Prostate gland (tissue), 2 donors: ENCODE measurements at regions of chr6 and their contacts with region 1.

Region 1: GRCh38 chr6:797479-798077 is 104.6 kb upstream of the EXOC2 start:
- DNase-seq: peak; percentile 59
- H3K4me3 ChIP-seq: no peak overlapping the region
- H3K27ac ChIP-seq: no peak overlapping the region
- H3K4me1 ChIP-seq: no peaks in the 10 kb centered on the region
- H3K27me3 ChIP-seq: peaks cover 2% of the 10 kb centered on the region
- CTCF ChIP-seq: peak; percentile 51 to 90 (median 78)
- POLR2A ChIP-seq: no peak

Region 2: GRCh38 chr6:527989-528673 is 269.4 kb before region 1 on chr6:
- intact Hi-C with region 1: no loop called
- DNase-seq: no peak
- H3K4me3 ChIP-seq: no peak overlapping the region
- H3K27ac ChIP-seq: no peak overlapping the region
- H3K4me1 ChIP-seq: no peaks in the 10 kb centered on the region
- H3K27me3 ChIP-seq: no peaks in the 10 kb centered on the region
- CTCF ChIP-seq: no peak
- POLR2A ChIP-seq: no peak

Region 3: GRCh38 chr6:579339-579738 is 218.2 kb before region 1 on chr6:
- intact Hi-C with region 1: no loop called
- DNase-seq: no peak
- H3K4me3 ChIP-seq: no peak overlapping the region
- H3K27ac ChIP-seq: no peak overlapping the region
- H3K4me1 ChIP-seq: no peaks in the 10 kb centered on the region
- H3K27me3 ChIP-seq: no peaks in the 10 kb centered on the region
- CTCF ChIP-seq: no peak
- POLR2A ChIP-seq: no peak

Region 4: DNA sequence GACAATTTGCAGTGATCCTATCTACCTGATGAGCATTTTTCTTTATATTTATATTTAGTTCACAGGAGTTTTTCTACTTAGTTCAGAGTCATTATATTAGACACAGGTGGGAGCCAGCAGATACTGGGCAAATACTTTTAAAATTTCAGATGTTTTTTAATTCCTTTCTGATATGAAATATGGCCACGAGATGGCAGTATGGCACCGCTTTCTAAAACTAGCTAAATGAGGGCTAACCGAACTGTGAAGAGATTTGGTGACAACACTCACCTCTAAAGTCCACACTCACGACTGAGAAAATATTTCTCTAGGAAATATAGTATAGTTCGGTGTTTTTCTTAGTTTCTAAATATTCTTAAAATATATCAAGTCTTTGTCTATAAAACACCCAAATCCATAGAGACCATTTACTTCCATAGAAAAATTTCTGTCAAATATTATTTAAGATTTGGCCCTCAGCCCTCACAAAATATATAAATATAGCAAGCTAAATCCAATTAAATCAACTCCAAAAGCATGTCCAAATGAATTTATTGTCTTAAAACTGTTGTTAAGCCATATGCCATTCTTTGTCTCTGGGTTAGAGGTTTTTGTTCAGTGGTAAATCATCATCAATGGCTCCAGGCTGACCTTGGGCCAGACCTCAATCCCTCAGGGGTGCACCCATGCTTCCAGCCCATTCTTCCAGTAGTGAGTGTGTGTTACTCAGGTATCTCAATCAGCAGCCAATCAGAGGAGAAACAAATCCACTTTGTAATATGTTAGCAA is 204.3 kb before region 1 on chr6:
- intact Hi-C with region 1: loop called (anchors 5 kb)
- DNase-seq: peak; percentile 55
- H3K4me3 ChIP-seq: no peak overlapping the region
- H3K27ac ChIP-seq: no peak overlapping the region
- H3K4me1 ChIP-seq: no peaks in the 10 kb centered on the region
- H3K27me3 ChIP-seq: no peaks in the 10 kb centered on the region
- CTCF ChIP-seq: peak; percentile 38 to 86 (median 70)
- POLR2A ChIP-seq: no peak

Region 5: DNA sequence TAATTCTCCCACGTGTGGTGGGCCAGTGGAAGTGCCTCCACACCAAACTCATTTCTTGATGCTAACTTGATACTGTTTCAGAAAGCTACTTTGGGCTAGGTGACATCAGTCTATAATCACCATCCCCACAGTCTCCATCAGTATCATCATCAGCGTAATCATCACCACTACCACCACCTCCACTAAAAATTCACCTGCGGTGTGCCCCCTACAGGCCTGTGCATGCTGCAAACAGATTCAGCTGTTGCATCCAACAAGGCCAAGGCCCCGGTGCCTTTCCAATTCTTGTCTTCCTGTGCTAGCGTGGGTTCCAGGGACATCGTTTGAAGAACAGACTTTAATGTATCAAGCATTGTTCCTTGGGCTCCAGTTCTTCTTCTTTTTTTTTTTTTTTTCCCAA is 96.7 kb after region 1 on chr6:
- intact Hi-C with region 1: loop called (anchors 10 kb)
- DNase-seq: no peak
- H3K4me3 ChIP-seq: no peak overlapping the region
- H3K27ac ChIP-seq: no peak overlapping the region
- H3K4me1 ChIP-seq: no peaks in the 10 kb centered on the region
- H3K27me3 ChIP-seq: no peaks in the 10 kb centered on the region
- CTCF ChIP-seq: no peak
- POLR2A ChIP-seq: no peak

Region 6: DNA sequence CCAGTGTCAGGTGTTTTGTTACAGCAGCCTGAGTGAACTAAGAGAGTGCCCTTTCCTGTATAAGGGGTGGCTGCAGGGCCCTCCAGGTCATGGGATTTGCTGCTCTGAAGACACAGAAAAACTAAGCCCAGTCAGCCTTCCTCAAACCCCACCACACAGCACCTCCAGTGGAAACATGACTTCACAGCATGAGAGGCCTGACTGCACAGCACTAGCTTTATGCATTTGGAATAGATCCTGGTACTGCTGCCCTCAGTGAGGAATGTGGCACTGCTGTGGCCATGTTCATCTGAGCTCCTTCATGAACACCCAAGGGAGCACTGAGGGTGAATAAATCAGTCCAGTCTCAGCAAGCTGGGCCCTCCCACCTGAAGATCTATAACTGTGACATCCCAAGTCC is 218.2 kb after region 1 on chr6:
- intact Hi-C with region 1: no loop called
- DNase-seq: no peak
- H3K4me3 ChIP-seq: no peak overlapping the region
- H3K27ac ChIP-seq: no peak overlapping the region
- H3K4me1 ChIP-seq: peaks cover 2% of the 10 kb centered on the region
- H3K27me3 ChIP-seq: no peaks in the 10 kb centered on the region
- CTCF ChIP-seq: no peak
- POLR2A ChIP-seq: no peak

Region 7: DNA sequence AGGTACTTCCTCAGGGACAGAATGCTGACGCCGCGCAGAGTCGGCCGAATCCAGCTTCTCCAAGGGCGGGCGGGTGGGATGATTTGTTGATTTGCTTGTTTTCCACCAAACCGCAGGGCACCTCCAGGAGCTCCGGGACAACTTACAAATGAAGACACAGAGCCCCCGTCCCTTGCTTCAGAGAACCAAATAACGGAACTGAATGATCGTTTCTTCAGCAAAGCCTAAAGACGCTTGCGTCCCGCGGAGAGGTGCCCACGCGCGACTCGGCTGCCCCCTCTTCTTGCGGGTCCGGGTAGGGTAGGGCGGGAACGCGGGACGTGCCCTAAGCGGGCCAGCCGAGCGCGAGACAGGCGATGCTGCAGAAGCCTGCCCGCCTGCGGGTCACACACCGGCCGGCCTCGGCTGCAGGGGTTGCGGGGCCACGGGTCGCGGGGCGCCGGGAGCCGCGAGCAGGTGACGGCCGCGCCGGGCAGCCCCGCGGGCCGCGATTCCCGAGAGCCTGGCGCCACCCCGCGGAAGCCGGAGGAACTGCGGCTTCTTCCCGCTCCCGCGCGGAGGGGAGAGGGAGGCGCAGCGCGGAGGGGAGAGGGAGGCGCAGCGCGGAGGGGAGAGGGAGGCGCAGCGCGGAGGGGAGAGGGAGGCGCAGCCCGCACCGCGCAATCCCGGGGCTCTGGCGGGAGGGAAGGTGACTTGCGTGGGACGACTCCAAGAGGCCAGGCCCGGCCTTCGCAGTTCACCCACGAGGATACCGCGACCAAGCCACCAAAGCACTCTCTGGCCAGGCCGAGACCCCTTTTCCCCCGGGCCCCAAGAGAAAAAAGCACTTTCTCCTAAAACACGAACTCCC is 584.1 kb after region 1 on chr6:
- intact Hi-C with region 1: loop called (anchors 2 kb)
- DNase-seq: no peak
- H3K4me3 ChIP-seq: peak overlapping the region; percentile 12 to 18
- H3K27ac ChIP-seq: peak overlapping the region; percentile 42 to 49
- H3K4me1 ChIP-seq: no peaks in the 10 kb centered on the region
- H3K27me3 ChIP-seq: peaks cover 58% of the 10 kb centered on the region
- CTCF ChIP-seq: peak; percentile 82 to 92 (median 88)
- POLR2A ChIP-seq: no peak

Region 8: GRCh38 chr6:1396952-1397868 is 599.6 kb after region 1 on chr6:
- intact Hi-C with region 1: loop called (anchors 5 kb)
- DNase-seq: peak; percentile 66
- H3K4me3 ChIP-seq: no peak overlapping the region
- H3K27ac ChIP-seq: peak overlapping the region; percentile 30 to 72
- H3K4me1 ChIP-seq: no peaks in the 10 kb centered on the region
- H3K27me3 ChIP-seq: peaks cover 15% of the 10 kb centered on the region
- CTCF ChIP-seq: peak; percentile 83 to 90 (median 86)
- POLR2A ChIP-seq: no peak